Sciatic nerve (tissue), 2 donors: ENCODE measurements at regions of chr6 and their contacts with region 1.

Region 1: DNA sequence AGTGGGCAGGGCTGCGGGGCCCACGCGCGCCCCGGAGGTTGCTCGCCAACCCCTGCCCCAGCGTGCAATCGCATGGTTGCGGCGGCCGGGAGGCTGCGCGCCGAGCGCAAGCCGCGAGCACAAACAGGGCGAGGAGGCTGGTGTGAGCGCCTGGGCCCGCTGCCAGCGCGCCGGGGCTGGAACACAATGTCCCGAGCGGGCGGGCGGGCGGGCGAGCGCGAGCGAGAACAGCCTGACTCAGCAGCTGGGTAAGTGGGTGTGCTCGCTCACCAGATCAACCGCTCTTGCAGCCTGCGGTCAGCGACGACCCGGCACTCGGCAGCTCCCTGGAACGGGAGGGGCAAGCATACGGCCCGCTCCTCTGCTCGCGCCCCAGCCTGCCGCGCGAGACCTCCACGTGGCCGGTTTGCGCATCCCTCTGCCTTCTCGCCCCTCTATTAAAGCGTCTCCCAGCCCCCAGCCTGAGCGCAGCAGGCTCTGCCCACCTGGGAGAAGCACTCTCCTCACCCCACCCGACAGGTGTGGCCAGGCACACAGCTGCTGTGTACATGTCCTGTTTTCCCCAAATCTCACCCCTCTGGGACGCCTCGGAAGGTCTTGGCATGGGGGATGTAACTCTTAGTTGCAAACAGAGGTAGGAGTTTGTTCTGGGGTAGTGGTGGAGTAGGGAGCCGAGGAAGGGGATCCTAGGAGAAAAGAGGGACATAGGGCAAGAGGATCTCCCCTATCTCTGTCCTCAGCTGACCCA is 8.7 kb upstream of the ARMC12 start:
- DNase-seq: peak; percentile 92
- ATAC-seq: peak; percentile 74

Region 2: DNA sequence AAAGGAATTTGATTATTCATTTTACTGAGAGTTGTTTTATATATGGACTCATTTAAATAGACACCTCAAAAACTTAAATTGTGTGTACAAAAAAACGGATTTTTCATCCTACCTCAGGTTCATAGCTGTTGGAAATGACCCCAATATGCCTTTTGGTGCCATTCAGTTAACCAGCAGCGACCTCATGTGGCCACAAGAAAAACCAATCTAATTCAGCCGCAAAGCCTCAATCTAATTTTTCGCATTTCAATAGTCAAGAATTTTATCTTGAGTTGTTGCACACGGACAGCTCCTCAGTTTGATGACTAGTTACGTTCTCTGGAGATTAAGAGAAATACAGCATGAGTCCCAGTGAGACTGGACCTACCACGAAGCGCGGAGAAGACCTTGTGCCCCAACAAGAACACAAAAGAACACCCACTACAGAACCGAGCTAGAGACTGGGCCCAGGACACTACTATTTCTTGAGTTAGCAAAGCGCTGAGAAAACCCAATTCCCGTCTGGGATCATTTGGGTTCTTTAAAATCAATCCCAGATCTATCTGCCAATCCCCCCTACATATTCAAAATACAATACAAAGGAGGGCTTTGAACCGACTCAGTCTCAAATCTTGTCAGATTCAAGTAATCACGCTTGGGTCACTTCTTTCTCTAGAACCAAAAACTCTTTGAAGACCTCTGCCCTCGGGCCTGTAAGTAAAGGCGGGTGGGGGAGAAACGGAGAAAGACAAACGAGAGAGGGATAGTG is 588.0 kb before region 1 on chr6:
- intact Hi-C with region 1: no loop called
- DNase-seq: peak; percentile 70
- ATAC-seq: peak; percentile 70

Region 3: GRCh38 chr6:35688581-35689322 is 39.4 kb before region 1 on chr6 and contains the start of gene FKBP5:
- intact Hi-C with region 1: loop called (anchors 2 kb)
- DNase-seq: peak; percentile 96
- ATAC-seq: peak; percentile 93
- total RNA-seq, gene FKBP5: 23.6 TPM

Region 4: DNA sequence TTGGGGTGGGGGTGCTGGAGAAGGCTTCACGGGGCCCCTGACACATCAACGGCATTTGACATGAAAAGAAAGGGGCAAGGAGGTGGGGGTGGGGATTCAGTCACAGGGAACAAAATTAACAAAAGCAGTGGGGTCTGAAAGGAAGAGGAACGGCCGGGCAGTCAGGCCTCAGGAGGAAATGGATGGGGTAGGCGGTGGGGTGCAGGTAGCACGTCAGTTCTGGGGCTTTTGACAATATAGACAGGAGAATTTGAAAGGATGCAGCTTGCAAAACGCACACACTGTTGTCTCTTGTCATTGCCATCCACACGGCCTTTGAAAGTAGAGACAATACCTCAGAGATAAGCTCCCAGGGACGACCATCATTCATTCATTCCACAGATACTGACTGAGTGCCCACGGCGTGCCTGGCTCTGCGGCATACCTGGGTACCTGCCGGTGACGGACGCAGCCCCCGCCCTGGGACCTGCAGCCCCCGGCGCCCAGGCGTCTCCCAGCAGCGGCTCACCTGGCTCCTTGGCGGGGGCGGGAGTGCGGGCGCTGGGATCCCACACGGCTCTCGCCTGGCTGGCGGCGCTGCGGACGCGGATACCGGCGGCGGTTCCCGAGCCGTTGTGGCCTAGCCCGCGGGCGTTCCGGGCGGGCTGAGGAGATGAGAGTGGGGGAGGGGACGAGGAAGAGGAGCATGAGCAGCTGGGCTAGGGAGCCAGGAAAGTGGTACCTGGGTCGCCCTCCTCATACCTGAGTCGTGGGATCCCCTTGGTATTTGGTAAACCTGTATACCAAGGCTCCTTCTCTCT is 296.1 kb after region 1 on chr6 and contains the start of gene SLC26A8:
- intact Hi-C with region 1: no loop called
- DNase-seq: no peak
- ATAC-seq: no peak
- total RNA-seq, gene SLC26A8: 1.5 TPM